Activated CD4-positive, alpha-beta T cell treated with anti-CD3 and anti-CD28 coated beads for 36 hours (primary cell): ENCODE measurements at regions of chr5 and their contacts with region 1.

Region 1: DNA sequence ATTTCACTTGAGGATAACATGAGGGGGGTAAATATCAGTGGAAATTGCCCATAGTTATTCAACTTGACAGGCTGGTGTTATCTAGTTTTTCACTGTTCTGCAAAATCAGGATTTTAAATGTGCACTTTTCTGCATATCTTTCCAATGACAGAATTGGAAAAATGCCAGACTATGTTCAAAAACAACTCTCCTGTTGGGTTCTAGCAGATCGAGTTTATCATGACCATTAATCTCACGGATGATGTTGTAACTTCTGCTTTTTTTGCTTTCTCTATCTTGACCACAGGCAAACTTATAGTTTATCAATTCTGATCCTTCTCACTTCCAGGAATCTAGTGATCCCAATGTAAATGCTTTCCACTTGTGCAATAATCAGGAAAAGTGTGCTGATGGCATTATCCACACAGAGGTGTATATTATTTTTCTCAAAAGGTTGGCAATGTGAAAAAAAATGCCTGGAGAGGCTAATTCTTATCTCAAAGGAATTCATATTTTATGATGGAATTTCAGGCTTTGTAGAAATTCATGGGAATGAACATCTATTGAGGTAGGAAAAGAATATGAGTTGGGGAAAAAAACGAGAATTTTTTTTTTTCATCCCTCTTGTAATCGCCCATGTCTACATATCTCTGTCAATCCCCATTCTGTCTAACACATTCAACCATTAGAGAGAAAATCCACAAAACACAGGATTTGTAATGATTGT is 73.6 kb upstream of the DAB2 start:
- DNase-seq: no peak
- ATAC-seq: no peak
- H3K4me3 Mint-ChIP-seq: no peak overlapping the region
- H3K27ac Mint-ChIP-seq: no peak overlapping the region
- H3K4me1 Mint-ChIP-seq: no peaks in the 10 kb centered on the region
- H3K27me3 Mint-ChIP-seq: peaks cover 6% of the 10 kb centered on the region

Region 2: DNA sequence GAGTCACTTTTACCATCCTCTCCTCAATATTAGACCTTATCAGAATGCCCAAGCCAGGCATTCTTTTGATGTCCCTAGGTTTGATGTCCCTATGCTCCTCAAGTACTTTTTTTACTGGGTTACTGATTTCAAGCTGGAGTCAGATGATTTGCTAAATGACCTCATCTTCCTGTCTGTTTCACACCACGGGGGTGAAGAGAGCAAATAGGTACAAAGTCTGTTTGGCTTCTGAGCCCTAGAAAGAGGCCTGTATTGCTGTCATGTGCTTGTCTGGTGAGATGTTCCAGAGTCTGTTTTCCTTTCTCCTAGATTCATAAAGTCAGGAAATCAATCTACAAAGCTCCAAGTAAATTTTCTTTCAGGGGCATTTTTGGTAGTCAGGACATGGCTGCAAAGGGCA is 60.9 kb before region 1 on chr5:
- CTCF ChIA-PET with region 1: no interaction called
- POLR2A ChIA-PET with region 1: no interaction called
- intact Hi-C with region 1: no loop called
- DNase-seq: no peak
- ATAC-seq: no peak
- H3K4me3 Mint-ChIP-seq: no peak overlapping the region
- H3K27ac Mint-ChIP-seq: no peak overlapping the region
- H3K4me1 Mint-ChIP-seq: no peaks in the 10 kb centered on the region
- H3K27me3 Mint-ChIP-seq: peaks cover 2% of the 10 kb centered on the region

Region 3: DNA sequence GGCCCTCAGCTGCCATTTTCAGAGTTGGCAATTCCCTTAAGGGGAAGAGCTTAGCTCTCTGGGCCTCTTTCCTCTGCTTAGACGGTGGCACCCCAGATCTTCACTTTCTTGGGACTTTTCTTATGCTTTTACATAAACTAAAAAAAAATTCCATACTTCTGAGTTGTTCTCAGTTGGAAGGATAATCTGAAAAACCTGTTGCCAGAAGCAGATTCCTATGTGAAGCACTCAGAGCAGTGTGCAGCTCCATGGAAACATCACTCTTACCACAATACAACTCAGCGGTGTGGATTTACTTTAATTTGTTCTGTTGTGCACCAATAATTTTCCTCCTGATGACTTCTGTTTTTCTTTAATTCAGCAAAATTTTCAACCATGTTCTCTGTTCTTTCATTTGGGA is 1616.9 kb after region 1 on chr5:
- CTCF ChIA-PET with region 1: no interaction called
- POLR2A ChIA-PET with region 1: no interaction called
- intact Hi-C with region 1: loop called in 1 of 2 experiments (anchors 10 kb)
- DNase-seq: no peak
- ATAC-seq: no peak
- H3K4me3 Mint-ChIP-seq: no peak overlapping the region
- H3K27ac Mint-ChIP-seq: no peak overlapping the region
- H3K4me1 Mint-ChIP-seq: no peaks in the 10 kb centered on the region
- H3K27me3 Mint-ChIP-seq: no peaks in the 10 kb centered on the region